GM18951 (cell line): ENCODE measurements at regions of chr15 and their contacts with region 1.

Region 1: GRCh38 chr15:85840065-85840801 is 45.5 kb upstream of the KLHL25 start:
- POLR2A ChIP-seq: no peak

Region 2: DNA sequence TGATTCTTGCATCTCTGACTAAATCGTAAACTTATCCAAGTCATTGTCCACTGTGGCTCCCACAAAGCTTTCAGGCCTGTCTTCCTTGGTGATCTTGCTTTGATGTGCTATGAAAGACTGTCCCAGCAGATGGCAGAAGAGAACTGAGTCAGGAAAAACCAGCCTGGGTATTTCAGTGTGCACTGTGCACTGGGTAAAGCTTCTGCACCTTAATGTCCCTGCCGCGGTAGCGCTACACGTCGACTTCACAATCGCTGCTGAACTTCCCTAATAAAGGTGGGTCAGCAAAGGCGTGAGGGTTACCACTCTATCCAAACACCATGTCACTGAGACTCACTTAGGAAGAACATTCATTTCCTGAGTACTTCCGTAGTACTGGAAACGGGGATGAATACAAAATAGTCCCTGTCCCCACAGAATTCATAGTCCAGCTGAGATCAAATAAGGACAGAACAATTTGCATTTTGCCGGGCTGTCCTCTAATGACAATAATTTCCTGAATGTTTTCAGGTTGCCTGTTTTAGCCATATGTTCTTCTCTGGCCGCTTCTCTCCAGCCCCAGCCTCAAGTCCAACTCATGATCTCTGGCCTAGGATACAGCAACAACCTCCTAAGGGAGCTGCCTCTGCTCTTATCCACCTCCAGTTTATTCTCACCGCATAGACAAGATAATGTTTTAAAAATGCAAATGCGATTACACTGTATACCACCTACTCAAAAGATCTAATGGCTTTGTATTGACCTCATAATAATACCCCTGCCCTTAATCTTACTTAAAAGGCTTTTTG is 543.4 kb before region 1 on chr15:
- in situ Hi-C with region 1: loop called (anchors 25 kb)
- POLR2A ChIP-seq: no peak

Region 3: DNA sequence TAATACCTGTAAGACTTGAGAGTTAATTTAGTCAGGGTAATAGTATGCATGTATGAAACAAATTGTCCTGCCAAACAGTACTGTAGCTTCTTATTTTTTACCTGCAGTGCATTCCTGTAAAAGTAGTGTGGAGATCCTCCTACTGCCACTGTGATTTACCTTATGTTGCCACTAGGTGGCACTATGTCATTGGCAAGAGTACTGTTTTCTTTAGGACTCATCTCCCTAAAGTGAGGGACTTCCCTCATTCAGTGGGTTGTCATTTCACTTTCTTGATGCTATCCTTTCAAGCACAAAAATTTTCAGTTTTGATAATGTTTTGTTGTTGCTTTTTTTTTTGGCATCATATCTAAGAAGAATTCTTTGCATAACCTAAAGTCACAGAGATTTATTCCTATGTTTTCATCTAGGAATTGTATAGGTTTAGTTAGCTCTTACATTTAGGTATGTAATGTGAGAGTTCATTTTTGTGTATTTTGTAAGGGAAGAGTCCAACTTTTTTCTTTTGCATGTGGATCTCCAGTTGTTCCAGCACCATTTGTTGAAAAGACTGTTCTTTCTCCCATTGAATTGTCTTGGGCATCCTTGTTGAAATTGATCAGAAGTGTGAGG is 354.2 kb before region 1 on chr15:
- in situ Hi-C with region 1: loop called (anchors 25 kb)
- POLR2A ChIP-seq: no peak

Region 4: GRCh38 chr15:85618956-85619491 is 221.2 kb before region 1 on chr15:
- in situ Hi-C with region 1: loop called (anchors 25 kb)
- POLR2A ChIP-seq: no peak